A673 (cell line): ENCODE measurements at regions of chr2 and their contacts with region 1.

Region 1: GRCh38 chr2:174334781-174335251 is at the start of gene SP9:
- DNase-seq: peak; percentile 88
- H3K4me3 ChIP-seq: peak within 1 kb of the TSS; percentile 48
- H3K27ac ChIP-seq: no peak within 1 kb of the TSS
- H3K4me1 ChIP-seq: peaks cover 25% of the 10 kb centered on the region
- H3K27me3 ChIP-seq: peaks cover 95% of the 10 kb centered on the region
- CTCF ChIP-seq: no peak
- total RNA-seq, gene SP9: 0.11 and 0.15 TPM in 2 replicates

Region 2: GRCh38 chr2:173922760-173923159 is 412.1 kb before region 1 on chr2:
- CTCF ChIA-PET with region 1: no interaction called
- POLR2A ChIA-PET with region 1: no interaction called
- intact Hi-C with region 1: no loop called
- DNase-seq: no peak
- H3K4me3 ChIP-seq: no peak overlapping the region
- H3K27ac ChIP-seq: no peak overlapping the region
- H3K4me1 ChIP-seq: no peaks in the 10 kb centered on the region
- H3K27me3 ChIP-seq: no peaks in the 10 kb centered on the region
- CTCF ChIP-seq: no peak

Region 3: GRCh38 chr2:174195253-174195652 is 139.6 kb before region 1 on chr2:
- CTCF ChIA-PET with region 1: no interaction called
- POLR2A ChIA-PET with region 1: no interaction called
- intact Hi-C with region 1: no loop called
- DNase-seq: no peak
- H3K4me3 ChIP-seq: no peak overlapping the region
- H3K27ac ChIP-seq: no peak overlapping the region
- H3K4me1 ChIP-seq: no peaks in the 10 kb centered on the region
- H3K27me3 ChIP-seq: no peaks in the 10 kb centered on the region
- CTCF ChIP-seq: no peak

Region 4: GRCh38 chr2:174248187-174248997 is 86.4 kb before region 1 on chr2 and contains the start of gene OLA1:
- CTCF ChIA-PET with region 1: no interaction called
- POLR2A ChIA-PET with region 1: no interaction called
- intact Hi-C with region 1: loop called (anchors 5 kb)
- DNase-seq: peak; percentile 98
- H3K4me3 ChIP-seq: peak within 1 kb of the TSS; percentile 90
- H3K27ac ChIP-seq: peak within 1 kb of the TSS; percentile 87
- H3K4me1 ChIP-seq: peaks cover 10% of the 10 kb centered on the region
- H3K27me3 ChIP-seq: no peaks in the 10 kb centered on the region
- CTCF ChIP-seq: no peak
- total RNA-seq, gene OLA1: 174 and 176 TPM in 2 replicates